H1 (cell line): ENCODE measurements at regions of chr1 and their contacts with region 1.

Region 1: DNA sequence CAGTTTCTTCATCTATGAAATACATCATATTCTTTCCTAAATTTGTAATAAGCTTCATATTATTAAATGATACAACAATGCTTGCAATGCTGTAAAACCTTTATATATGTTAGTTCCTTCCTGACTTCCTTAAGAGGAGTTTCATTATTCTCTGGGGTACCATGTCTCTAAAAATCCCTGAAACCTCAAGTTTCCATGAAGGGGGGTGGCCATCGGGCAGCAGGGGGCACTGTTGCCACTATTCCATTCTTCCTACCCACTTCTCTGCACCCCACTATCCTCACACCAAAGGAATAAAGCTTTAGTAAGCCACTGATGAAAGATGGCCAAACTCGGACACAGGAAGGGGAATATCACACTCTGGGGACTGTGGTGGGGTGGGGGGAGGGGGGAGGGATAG is 9.0 kb upstream of the DMRTB1 start:
- DNase-seq: peak in 1 of 2 experiments; percentile 75
- H3K4me3 ChIP-seq: no peak overlapping the region; a peak in 1 of 8 replicates
- H3K27ac ChIP-seq: no peak overlapping the region
- H3K4me1 ChIP-seq: peaks cover 3 to 24% (median 19%) of the 10 kb centered on the region in 4 experiments
- H3K27me3 ChIP-seq: no peaks in the 10 kb centered on the region; a peak in 1 of 7 replicates
- CTCF ChIP-seq: peak; percentile 59 to 67 (median 60)
- EP300 ChIP-seq: no peak
- POLR2A ChIP-seq: no peak
- RAD21 ChIP-seq: peak; percentile 32 to 51; a peak in 3 of 4 replicates

Region 2: GRCh38 chr1:53430261-53430660 is 20.0 kb before region 1 on chr1:
- CTCF ChIA-PET with region 1: interaction called, 20 read pairs
- POLR2A ChIA-PET with region 1: interaction called, 34 read pairs
- DNase-seq: no peak
- H3K4me3 ChIP-seq: peak overlapping the region in 2 of 4 experiments; percentile 2 to 43; a peak in 2 of 8 replicates
- H3K27ac ChIP-seq: peak overlapping the region; percentile 79
- H3K4me1 ChIP-seq: peaks cover 0 to 13% (median 8%) of the 10 kb centered on the region in 4 experiments; a peak in 4 of 7 replicates
- H3K27me3 ChIP-seq: no peaks in the 10 kb centered on the region
- CTCF ChIP-seq: no peak
- EP300 ChIP-seq: no peak
- POLR2A ChIP-seq: peak in 1 of 2 experiments; percentile 7; a peak in 1 of 3 replicates
- RAD21 ChIP-seq: no peak

Region 3: GRCh38 chr1:53462769-53463501 is 12.7 kb after region 1 on chr1:
- CTCF ChIA-PET with region 1: interaction called, 248 read pairs
- POLR2A ChIA-PET with region 1: interaction called, 8 read pairs
- DNase-seq: no peak
- H3K4me3 ChIP-seq: no peak overlapping the region
- H3K27ac ChIP-seq: no peak overlapping the region
- H3K4me1 ChIP-seq: no peaks in the 10 kb centered on the region; a peak in 3 of 7 replicates
- H3K27me3 ChIP-seq: peaks cover 0 to 4% (median 0%) of the 10 kb centered on the region in 4 experiments; a peak in 1 of 7 replicates
- CTCF ChIP-seq: no peak
- EP300 ChIP-seq: no peak
- POLR2A ChIP-seq: no peak
- RAD21 ChIP-seq: no peak

Region 4: DNA sequence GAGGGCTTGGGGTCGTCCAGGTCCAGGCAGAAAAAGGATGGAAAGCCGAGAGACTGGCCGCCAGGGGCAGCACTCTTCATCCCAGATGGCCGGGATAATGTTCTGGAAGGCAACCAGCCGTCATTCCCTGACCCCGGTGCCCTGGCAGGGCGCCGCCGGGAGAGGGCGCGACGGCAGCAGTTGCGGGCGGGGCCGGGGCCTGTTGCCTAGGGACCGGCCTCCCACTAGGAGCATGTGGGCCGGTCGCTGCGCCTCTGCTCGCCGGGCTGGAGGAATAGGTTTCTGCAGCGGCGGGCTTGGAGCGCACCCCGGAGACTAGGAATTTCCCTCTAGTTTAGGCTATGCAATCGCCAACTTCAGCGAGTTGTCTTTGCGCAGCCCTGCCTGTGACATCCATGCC is 19.9 kb after region 1 on chr1:
- CTCF ChIA-PET with region 1: interaction called, 248 read pairs
- POLR2A ChIA-PET with region 1: interaction called, 6 read pairs
- DNase-seq: peak; percentile 84 to 99
- H3K4me3 ChIP-seq: peak overlapping the region in 1 of 4 experiments; percentile 19; a peak in 2 of 8 replicates
- H3K27ac ChIP-seq: no peak overlapping the region
- H3K4me1 ChIP-seq: peaks cover 0 to 7% (median 4%) of the 10 kb centered on the region in 4 experiments; a peak in 5 of 7 replicates
- H3K27me3 ChIP-seq: peaks cover 0 to 6% (median 2%) of the 10 kb centered on the region in 4 experiments; a peak in 3 of 7 replicates
- CTCF ChIP-seq: peak; percentile 98 to 99 (median 99)
- EP300 ChIP-seq: peak in 1 of 2 experiments; percentile 80; a peak in 2 of 3 replicates
- POLR2A ChIP-seq: no peak
- RAD21 ChIP-seq: peak; percentile 55 to 75